ENCODE measurements at regions of chr7 and their contacts with region 1.

Region 1: DNA sequence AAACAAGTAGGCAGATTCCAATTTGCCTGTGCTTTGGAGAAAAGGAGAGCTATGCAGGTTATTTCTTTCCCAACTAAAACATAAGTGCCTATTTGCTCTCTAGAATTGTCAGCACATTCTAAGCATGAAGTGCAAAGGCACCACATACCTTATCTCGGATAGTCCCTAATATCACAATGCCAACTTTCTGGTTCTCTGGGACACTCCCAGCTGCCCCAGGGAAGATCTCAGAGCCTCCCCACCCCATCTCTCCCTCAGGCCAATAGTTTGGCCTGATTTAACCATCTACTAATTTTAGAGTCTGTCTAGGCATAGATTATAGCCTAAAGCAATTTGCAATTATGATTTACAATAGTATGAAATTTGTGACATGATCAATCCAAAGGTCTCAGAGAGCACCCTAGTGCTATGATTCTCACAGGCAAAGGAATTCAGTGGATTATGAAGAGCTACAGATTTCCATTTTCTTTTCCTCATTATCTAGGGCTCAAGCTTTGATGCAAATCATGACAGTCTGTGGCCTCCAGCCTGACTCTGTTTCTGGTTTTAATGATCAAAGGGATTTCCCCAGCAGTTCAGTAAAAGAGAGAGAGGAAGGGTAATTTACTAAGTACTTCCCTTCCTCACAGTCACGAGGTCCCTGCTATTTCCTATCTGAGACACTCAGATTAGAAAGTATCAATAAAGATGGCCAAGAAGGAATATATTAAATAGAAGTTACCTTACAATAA is 29.0 kb upstream of the IL6 start:
- DNase-seq: peak; percentile 26
- H3K4me3 Mint-ChIP-seq: peak overlapping the region; percentile 57
- H3K27ac Mint-ChIP-seq: peak overlapping the region; percentile 79
- H3K4me1 Mint-ChIP-seq: peaks cover 74% of the 10 kb centered on the region
- H3K27me3 Mint-ChIP-seq: peaks cover 3% of the 10 kb centered on the region

Region 2: DNA sequence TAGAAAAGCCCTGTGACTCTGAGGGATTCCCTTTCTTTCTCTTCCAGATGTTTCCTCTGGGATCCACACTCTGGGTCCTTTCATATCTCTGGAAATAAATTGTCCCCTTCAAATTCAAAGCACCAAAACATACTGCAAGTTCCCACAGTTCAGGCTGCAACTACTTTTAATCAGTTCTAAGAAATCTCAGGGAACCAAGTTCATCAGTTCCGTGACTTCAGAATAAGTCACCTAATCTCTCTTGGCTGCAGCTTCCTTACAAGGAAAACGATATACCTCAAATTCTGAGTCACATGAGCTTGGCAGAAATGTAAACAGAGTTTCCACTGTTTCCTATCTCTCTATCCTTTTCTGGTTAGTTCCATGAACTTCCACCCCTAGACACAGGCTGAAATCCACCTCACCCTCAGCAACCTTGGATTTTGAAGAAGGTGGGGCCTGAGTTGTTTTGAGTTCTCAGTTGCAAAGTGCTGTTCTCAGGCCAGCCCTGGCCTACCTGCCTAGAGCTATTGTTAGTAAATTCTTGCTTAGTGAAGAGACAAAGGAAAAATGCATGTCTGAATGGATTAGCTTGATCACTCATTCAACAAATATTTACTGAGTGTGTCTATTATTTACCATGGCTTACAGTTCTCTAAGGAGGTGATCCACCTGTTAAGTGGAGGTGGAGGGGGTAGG is 30.3 kb before region 1 on chr7:
- intact Hi-C with region 1: loop called (anchors 1 kb)
- DNase-seq: no peak
- H3K4me3 Mint-ChIP-seq: no peak overlapping the region
- H3K27ac Mint-ChIP-seq: no peak overlapping the region
- H3K4me1 Mint-ChIP-seq: peaks cover 52% of the 10 kb centered on the region
- H3K27me3 Mint-ChIP-seq: peaks cover 8% of the 10 kb centered on the region

Region 3: GRCh38 chr7:23093546-23093945 is 395.5 kb after region 1 on chr7:
- intact Hi-C with region 1: no loop called
- DNase-seq: no peak
- H3K4me3 Mint-ChIP-seq: no peak overlapping the region
- H3K27ac Mint-ChIP-seq: no peak overlapping the region
- H3K4me1 Mint-ChIP-seq: no peaks in the 10 kb centered on the region
- H3K27me3 Mint-ChIP-seq: peaks cover 9% of the 10 kb centered on the region